Posterior vena cava (tissue), 2 donors: ENCODE measurements at regions of chr10 and their contacts with region 1.

Region 1: GRCh38 chr10:44386546-44387052 is 1.7 kb upstream of the CXCL12 start:
- DNase-seq: peak; percentile 90

Region 2: DNA sequence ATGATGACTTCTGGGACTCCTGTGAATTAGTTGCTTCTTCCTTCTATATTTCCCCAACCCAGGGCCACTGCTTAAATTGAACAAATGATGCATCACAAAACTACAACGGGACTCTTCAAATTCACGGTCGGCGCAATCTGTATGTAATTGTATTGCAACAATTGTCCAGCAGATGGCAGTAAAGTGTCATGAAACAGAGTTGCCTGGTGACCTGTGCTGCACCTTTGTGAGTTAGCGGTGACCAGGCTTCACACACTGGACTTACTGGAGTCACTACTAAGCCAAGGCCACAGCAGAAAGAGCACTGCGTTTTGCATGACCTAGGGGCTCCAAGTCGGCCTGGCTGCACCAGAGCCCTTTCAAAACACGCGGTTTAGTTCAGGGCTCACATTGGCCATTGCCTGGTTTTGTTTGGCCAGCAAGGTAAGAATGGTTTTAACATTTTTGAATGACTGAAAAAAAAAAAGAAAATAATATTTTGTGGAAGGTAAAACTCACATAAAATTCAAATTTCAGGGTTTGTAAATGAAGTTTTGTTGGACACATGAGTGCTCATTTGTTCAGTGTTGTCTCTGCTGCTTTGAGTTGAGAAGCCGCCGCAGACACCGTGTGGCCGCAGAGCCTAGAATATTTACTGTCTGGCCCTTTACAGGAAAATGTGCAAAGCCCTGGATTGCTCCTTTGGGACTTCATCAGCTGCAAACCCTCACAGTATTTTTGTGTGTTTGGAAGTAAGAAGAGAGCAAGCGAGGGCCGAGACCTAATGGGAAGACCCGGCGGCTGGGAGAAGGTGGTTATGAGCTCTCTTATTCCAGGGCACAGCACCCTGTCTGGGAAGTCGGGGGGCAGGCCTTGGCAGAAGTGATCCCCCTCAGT is 714.7 kb before region 1 on chr10:
- intact Hi-C with region 1: loop called (anchors 2 kb)
- DNase-seq: no peak

Region 3: GRCh38 chr10:43689955-43690771 is 696.4 kb before region 1 on chr10:
- intact Hi-C with region 1: loop called in 1 of 2 experiments (anchors 5 kb)
- DNase-seq: peak; percentile 96

Region 4: DNA sequence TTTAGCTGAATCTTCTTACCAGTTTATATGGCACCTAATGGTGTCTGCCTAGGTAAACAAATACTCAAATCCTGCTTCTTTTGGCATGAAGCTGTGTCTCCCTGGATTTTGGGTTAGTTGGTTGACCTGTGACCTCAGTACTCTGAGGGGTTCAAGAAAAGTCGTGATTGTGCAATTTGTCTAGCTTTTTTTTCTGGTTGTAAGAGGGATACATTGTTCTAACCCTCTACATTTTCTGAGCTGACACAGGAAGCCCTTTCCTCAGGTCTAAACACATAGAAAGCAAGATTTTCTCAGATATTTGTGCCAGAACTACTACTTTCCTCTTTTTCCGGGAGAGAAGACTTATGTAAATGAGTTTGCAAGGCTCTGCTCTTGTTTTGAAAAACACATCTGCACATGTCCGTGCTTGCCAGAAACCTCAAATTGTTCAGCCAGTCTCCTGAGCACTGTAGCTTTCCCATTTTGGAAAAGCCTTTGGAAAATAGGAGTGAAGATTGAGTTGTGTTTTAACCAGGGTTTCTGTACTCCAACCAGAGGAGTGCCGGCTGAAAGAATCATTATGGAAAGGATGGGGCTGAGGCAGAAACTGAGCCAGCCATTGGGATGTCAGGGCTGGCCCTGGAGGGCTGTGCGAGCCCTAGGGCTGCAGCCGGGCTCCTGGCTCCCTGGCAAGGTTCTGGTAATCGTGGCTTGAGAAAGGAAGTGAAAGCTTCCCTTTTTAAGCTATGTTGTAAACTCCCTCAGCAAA is 29.6 kb after region 1 on chr10:
- intact Hi-C with region 1: loop called in 1 of 2 experiments (anchors 1 kb)
- DNase-seq: no peak

Region 5: DNA sequence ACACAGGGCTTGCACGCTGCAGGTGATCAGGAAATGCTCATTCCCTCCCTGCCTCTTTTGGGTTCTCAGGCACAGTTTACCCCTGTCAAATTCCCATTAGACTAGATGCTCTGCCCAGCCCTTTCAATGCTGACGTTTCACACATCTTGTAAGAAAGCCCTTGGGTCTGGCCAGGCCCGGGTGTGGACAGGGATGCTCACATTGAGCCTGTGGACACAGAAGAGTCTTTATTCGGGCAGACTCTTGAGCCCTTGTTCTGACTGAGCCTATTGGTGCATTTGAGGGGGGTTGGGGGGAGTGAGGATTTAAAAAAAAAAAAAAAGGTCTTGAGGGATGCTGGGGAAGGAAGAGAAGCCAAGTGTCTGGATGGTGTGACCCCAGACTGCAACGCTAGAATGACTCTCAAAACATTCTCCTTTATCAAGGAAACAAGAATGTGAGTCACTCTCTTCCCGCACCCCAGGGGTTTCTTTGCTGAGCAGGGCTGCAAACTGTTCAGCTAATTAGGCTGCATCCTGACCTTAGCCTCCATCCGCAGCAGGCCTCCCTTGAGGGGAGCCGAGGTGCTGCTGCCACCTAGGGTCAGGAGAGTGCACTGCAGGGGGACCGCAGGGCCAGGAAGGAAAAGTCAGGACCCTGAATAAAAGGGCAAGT is 470.9 kb after region 1 on chr10:
- intact Hi-C with region 1: loop called (anchors 5 kb)
- DNase-seq: peak; percentile 89

Region 6: DNA sequence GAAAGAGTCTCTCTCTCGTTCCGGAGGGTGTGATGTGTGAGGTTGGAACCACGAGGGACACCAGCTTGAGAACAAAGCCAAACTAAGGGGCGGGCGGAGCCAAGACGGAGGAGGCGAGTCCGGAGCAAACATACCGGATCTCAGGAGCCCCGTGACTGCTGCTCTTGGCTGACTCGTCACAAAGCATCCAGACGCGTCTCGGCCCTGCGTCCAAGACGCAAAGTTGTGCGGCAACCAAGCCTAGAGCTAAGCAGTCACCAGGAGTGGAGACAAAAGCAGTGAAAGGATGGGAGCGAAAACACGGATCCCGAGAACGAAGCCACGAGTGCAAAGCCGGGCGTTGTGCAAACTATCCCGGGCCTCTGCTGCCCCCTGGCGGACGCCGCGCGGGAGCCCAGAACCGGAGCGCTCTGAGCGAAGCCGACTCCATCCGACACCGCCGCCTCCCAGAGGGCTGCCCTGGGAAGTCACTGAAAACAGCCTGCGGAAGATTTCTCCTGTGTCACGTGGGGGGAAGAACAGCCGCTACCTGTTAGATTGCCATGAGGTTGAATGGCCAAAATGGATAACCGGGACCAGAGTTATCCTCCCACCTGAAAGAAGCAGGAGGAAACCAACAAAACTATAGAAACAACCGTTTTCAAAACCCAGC is 478.2 kb after region 1 on chr10:
- intact Hi-C with region 1: loop called (anchors 5 kb)
- DNase-seq: peak; percentile 97